ENCODE measurements at regions of chr1 and their contacts with region 1.

Region 1: GRCh38 chr1:17236779-17237560 is 11.9 kb upstream of the PADI3 start:
- DNase-seq: peak; percentile 89
- CTCF ChIP-seq: peak; percentile 94

Region 2: GRCh38 chr1:17059739-17060460 is 177.1 kb before region 1 on chr1:
- CTCF ChIA-PET with region 1: interaction called, 18 read pairs
- POLR2A ChIA-PET with region 1: no interaction called
- DNase-seq: peak; percentile 71
- CTCF ChIP-seq: peak; percentile 76

Region 3: DNA sequence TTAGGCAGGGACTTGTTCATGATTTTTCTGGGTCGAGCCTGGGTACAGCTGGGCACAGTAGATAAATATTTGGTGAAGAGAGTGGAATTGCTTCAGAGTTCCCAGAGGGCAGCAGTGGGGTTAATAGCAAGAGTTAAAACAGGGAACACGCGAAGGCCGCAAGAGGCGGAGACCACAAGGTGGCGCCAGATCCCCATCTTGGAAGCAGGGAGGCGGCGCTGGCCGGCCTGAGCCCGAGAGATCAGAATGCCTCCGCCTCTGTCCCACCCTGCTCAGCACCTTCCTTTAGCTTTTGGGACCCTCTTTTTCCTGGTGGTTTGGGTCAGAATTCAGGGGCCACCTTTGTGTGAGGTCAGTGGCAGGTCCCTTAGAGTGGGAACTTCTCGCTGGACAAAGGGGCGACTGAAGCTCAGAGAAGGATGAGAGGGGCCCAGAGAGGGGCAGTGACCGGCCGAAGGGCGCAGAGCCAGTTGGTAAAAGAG is 111.2 kb before region 1 on chr1:
- CTCF ChIA-PET with region 1: interaction called, 209 read pairs
- POLR2A ChIA-PET with region 1: no interaction called
- DNase-seq: peak; percentile 88
- CTCF ChIP-seq: peak; percentile 97

Region 4: GRCh38 chr1:17248781-17249180 is 11.8 kb after region 1 on chr1 and contains the start of gene PADI3:
- CTCF ChIA-PET with region 1: interaction called, 13 read pairs
- POLR2A ChIA-PET with region 1: no interaction called
- DNase-seq: no peak
- CTCF ChIP-seq: no peak

Measured in GM10248 (cell line).